ENCODE measurements at regions of chr17 and their contacts with region 1.

Region 1: DNA sequence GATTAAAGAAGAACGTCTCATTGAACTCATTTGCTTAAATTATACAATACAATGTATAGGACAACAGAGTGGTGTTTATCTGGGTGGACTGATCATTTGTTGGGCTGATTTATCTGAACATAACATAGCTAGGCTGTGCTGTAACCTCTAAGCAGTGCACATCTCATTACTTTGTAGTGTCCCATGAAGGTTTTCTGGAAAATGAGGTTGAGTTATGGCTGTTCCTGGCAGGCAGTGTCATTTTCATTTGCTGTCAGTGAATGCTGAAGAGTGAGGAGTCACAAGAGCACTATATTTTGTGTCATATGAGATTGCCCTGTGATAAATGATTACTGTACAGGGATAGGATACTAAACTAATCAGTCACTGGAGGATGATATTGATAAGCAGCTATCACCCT is 340.2 kb downstream of the HS3ST3B1 start:
- DNase-seq: no peak
- CTCF ChIP-seq: no peak

Region 2: GRCh38 chr17:14098224-14098623 is 542.9 kb before region 1 on chr17:
- in situ Hi-C with region 1: no loop called
- DNase-seq: no peak
- CTCF ChIP-seq: no peak

Region 3: DNA sequence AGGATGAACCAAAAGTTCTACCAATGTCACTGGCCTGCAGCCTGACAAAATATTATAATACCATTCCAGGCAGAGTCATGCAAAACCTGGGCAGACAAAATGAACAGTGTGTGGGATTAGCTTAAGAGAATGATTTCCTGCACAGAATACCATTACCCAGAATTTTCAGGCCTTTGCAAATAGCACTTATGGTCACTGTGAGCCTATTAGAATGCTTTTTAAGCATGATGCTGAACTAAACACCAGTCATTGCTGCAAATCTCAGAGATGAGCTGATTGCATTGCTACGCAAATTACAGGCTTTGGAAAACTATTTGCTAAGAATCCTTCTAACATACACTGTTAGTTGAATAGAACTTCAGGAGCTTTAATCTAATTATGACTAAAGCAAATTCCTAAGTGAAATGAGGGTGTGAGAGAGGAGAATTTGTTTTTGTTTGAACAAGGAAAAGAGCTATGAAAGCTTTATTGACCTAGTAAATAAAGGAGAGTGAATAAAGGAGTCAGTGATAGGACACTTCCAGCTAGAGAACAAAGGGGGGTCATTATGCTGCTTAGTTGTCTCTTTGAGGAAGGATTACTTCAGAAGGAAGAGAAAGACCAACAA is 58.6 kb after region 1 on chr17:
- in situ Hi-C with region 1: loop called (anchors 10 kb)
- DNase-seq: no peak
- CTCF ChIP-seq: no peak

Region 4: GRCh38 chr17:14935139-14935841 is 294.2 kb after region 1 on chr17:
- in situ Hi-C with region 1: no loop called
- DNase-seq: no peak
- CTCF ChIP-seq: no peak

Region 5: GRCh38 chr17:15038656-15039055 is 397.5 kb after region 1 on chr17:
- in situ Hi-C with region 1: no loop called
- DNase-seq: no peak
- CTCF ChIP-seq: no peak

Measured in GM13976 (cell line).